H1 (cell line): ENCODE measurements at regions of chr16 and their contacts with region 1.

Region 1: GRCh38 chr16:30445408-30446202 is at the start of gene SEPHS2:
- DNase-seq: peak; percentile 96 to 97
- H3K4me3 ChIP-seq: peak within 1 kb of the TSS; percentile 71 to 86 (median 78)
- H3K27ac ChIP-seq: peak within 1 kb of the TSS; percentile 44; the same call in 1 of the 2 replicates
- H3K4me1 ChIP-seq: peaks cover 0 to 9% (median 6%) of the 10 kb centered on the region in 4 experiments; a peak in 5 of 7 replicates
- H3K27me3 ChIP-seq: peaks cover 0 to 4% (median 1%) of the 10 kb centered on the region in 4 experiments; a peak in 1 of 7 replicates
- CTCF ChIP-seq: peak; percentile 28 to 39 (median 33); a peak in 3 of 4 replicates
- EP300 ChIP-seq: no peak
- POLR2A ChIP-seq: peak; percentile 65 to 88
- RAD21 ChIP-seq: no peak; a peak in 2 of 4 replicates
- total RNA-seq, gene SEPHS2: 61.8 and 62.0 TPM in 2 replicates

Region 2: GRCh38 chr16:30335598-30336474 is 109.8 kb before region 1 on chr16:
- CTCF ChIA-PET with region 1: no interaction called
- POLR2A ChIA-PET with region 1: no interaction called
- DNase-seq: no peak
- H3K4me3 ChIP-seq: peak overlapping the region in 1 of 4 experiments; percentile 69; a peak in 2 of 8 replicates
- H3K27ac ChIP-seq: no peak overlapping the region
- H3K4me1 ChIP-seq: peaks cover 0 to 3% (median 0%) of the 10 kb centered on the region in 4 experiments; a peak in 1 of 7 replicates
- H3K27me3 ChIP-seq: no peaks in the 10 kb centered on the region
- CTCF ChIP-seq: no peak
- EP300 ChIP-seq: no peak
- POLR2A ChIP-seq: no peak
- RAD21 ChIP-seq: no peak

Region 3: DNA sequence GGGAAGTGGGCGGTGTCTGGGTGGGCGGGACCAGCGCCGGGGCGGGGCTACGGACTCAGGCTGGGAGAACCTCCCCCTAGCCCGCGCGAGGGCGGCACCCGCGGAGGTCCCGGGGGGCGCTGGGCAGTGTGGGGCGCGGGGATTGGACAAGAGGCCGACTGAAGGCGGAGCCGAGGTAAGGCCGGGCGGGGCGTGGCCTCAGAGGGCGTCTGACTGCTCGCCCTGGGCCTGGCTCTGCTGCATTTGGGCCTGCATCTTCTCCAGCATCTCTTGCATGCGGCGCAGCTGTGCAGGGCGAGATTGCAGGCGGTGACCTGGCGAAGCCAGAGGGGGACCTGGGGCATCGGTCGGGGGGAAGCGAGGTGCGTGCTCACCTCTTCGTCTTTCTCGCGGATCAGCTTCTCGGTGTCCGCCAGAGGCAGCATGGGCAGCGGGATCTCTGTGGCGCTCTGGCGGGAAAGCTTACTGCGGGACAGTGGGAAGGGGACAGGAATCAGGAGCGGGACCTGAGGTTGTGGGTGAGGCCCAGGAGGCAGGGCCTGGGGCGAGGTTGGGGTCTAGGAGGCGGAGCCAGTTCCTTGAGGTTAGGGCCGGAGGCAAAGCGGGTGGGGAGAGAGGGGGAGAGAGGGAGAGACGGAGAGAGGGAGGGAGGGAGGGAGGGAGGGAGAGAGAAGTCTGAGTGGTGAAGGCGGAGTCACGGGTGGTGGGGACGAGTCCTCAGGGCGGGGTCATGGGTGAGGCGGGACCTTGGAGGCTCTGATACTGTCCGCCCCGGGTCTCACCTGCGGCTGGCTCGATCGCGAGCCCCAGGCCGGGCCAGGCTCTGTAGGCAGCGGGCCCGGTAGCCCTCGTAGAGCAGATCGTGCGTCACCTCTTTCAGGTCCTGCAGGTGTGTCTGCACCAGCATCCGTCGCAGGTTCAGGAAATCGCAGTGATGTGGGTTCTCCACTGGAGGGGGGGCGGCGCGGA is 67.1 kb before region 1 on chr16:
- CTCF ChIA-PET with region 1: no interaction called
- POLR2A ChIA-PET with region 1: no interaction called
- DNase-seq: peak; percentile 92 to 99
- H3K4me3 ChIP-seq: peak overlapping the region; percentile 70 to 88 (median 82)
- H3K27ac ChIP-seq: peak overlapping the region; percentile 92
- H3K4me1 ChIP-seq: peaks cover 0 to 9% (median 5%) of the 10 kb centered on the region in 4 experiments; a peak in 5 of 7 replicates
- H3K27me3 ChIP-seq: no peaks in the 10 kb centered on the region
- CTCF ChIP-seq: no peak
- EP300 ChIP-seq: no peak
- POLR2A ChIP-seq: peak; percentile 29 to 64; a peak in 2 of 3 replicates
- RAD21 ChIP-seq: no peak

Region 4: DNA sequence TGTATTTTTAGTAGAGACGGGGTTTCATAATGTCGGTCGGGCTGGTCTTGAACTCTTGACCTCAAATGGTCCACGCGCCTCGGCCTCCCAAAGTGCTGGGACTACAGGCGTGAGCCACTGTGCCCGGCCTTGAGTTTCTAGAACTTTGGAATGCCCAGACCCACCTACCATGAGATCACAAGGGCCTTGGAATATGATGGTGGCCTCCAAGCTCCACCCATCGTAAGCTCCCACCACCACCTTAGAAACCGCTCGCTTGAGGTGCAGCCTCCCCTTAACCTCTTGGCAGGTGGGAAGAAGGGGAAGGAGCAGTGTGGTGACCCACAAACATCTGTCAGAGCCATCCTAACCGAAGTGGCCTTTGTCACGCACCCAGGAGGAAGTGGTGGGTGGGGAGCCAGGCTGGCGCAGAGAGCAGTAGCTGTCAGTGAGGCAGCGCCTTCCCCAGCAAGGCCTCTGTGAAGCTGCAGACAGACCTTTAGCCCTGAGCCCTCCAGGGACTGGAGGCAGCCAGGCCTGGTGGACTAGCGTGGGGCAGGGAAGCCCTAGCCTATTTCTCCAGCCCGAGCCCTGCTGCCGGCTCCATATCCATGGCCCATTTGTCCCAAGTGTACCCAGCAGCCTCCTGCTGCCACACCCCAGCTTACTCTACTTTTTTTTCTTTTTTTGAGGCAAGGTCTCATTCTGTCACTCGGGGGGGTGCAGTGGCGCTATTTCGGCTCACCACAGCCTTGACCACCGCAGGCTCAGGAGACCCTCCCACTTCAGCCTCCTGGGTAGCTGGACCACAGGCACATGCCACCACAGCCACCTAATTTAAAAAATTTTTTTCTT is 13.2 kb after region 1 on chr16:
- CTCF ChIA-PET with region 1: interaction called, 21 read pairs
- POLR2A ChIA-PET with region 1: interaction called, 5 read pairs
- DNase-seq: no peak
- H3K4me3 ChIP-seq: no peak overlapping the region
- H3K27ac ChIP-seq: no peak overlapping the region
- H3K4me1 ChIP-seq: no peaks in the 10 kb centered on the region
- H3K27me3 ChIP-seq: no peaks in the 10 kb centered on the region; a peak in 1 of 7 replicates
- CTCF ChIP-seq: no peak
- EP300 ChIP-seq: no peak
- POLR2A ChIP-seq: no peak
- RAD21 ChIP-seq: no peak

Region 5: GRCh38 chr16:30482366-30482765 is 36.8 kb after region 1 on chr16:
- CTCF ChIA-PET with region 1: interaction called, 15 read pairs
- POLR2A ChIA-PET with region 1: no interaction called
- DNase-seq: no peak
- H3K4me3 ChIP-seq: no peak overlapping the region
- H3K27ac ChIP-seq: no peak overlapping the region
- H3K4me1 ChIP-seq: no peaks in the 10 kb centered on the region
- H3K27me3 ChIP-seq: no peaks in the 10 kb centered on the region
- CTCF ChIP-seq: peak in 1 of 3 experiments; percentile 42; a peak in 1 of 4 replicates
- EP300 ChIP-seq: no peak
- POLR2A ChIP-seq: no peak
- RAD21 ChIP-seq: no peak

Region 6: DNA sequence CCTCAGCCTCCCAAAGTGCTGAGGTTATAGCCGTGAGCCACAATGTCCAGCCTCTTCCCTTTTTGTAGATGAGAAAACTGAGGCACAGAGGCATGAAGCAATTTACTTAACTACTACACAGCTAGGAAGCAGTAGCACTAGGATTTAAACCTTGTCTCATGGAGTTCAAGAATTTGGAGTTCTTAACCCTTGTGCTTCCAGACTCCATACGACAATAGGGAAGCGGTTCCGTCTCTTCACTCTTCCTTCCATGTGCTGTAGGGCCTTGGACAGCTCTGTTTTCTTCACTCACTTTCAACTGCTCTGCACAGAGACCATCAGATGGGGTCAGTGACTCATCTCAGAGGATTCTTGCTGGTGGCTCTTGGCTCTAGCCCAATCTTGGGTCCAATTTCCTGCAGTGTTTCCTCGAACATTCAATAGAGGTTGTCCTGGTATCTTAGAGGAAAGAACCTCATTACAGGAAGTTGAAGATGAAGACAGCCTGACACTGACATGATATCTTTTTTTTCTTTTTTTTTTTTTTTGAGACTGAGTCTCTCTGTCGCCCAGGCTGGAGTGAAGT is 46.2 kb after region 1 on chr16:
- CTCF ChIA-PET with region 1: interaction called, 13 read pairs
- POLR2A ChIA-PET with region 1: interaction called, 3 read pairs
- DNase-seq: no peak
- H3K4me3 ChIP-seq: no peak overlapping the region
- H3K27ac ChIP-seq: no peak overlapping the region
- H3K4me1 ChIP-seq: peaks cover 0 to 3% (median 1%) of the 10 kb centered on the region in 4 experiments; a peak in 1 of 7 replicates
- H3K27me3 ChIP-seq: peaks cover 0 to 2% (median 0%) of the 10 kb centered on the region in 4 experiments; a peak in 1 of 7 replicates
- CTCF ChIP-seq: no peak
- EP300 ChIP-seq: no peak
- POLR2A ChIP-seq: no peak
- RAD21 ChIP-seq: no peak

Region 7: DNA sequence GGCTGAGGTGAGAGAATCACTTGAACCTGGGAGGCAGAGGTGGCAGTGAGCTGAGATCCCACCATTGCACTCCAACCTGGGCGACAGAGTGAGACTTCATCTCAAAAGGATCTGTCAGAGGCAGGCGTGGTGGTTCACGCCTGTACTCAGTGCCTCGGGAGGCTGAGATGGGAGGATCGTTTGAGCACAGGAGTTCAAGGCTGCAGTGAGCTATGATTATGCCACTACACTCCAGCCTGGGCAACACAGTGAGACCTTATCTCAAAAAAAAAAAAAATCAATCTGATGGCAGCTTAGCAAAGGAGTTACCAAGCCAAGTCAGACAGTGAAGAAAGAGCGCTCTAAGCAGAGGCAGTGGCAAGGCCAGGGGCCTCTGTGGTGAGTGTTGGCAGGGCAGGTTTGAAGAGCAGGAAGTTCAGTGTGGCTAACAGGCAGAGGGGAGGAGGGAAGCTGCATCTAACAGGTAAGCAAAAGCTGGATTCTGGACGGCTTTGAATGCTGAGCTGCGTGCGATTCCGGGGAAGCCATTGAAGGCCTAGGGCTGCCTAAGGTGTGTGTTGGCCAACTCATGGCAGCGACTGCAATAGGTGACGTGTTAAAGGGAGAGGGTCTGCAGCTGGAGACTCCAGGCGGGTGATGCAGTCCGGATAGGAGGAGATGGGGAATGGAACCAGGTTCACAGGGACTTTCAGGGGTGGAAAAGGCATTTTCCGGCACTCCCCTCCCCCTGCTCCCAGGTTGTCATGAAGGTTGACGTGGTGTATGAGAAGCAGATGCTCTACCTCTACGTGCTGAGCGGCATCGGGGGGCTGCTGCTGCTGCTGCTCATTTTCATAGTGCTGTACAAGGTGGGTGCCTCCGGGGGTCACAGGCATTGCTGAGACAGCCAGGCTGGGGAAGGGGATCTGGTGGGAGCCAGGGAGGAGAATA is 73.8 kb after region 1 on chr16:
- CTCF ChIA-PET with region 1: interaction called, 15 read pairs
- POLR2A ChIA-PET with region 1: no interaction called
- DNase-seq: no peak
- H3K4me3 ChIP-seq: no peak overlapping the region
- H3K27ac ChIP-seq: no peak overlapping the region
- H3K4me1 ChIP-seq: no peaks in the 10 kb centered on the region
- H3K27me3 ChIP-seq: no peaks in the 10 kb centered on the region; a peak in 1 of 7 replicates
- CTCF ChIP-seq: no peak
- EP300 ChIP-seq: no peak
- POLR2A ChIP-seq: no peak
- RAD21 ChIP-seq: no peak

Region 8: DNA sequence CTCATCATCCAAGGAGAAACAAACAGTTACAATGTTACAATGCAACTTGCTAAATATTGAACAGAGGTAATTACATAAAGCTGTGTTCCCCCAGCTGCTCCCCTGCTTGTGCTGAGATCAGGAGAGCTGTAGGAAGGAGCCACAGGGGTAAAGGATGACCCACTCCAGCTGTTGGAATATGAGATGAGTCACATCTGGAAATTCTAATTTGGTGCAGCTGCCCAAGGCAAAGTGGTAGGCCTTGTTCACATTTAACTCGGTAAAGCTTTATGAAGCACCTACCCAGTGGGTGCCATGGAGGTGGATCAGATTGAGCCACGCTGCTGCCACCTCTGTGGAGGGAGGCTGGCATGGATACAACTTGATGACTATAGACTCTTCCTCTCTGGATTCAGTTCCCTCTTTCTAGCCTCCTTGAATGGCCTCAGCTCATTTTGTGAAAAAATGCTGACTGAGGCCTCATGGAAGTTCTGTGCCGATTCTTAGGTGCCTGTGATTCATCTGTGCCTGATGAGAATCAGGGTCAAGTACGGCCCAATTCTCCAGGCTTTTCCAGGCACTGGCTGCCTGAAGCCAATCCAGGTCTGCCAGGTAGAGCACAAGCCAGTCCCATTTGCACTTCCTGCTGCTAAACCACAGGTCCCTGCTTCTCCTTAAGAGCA is 157.1 kb after region 1 on chr16:
- CTCF ChIA-PET with region 1: interaction called, 42 read pairs
- POLR2A ChIA-PET with region 1: no interaction called
- DNase-seq: no peak
- H3K4me3 ChIP-seq: no peak overlapping the region
- H3K27ac ChIP-seq: no peak overlapping the region
- H3K4me1 ChIP-seq: no peaks in the 10 kb centered on the region
- H3K27me3 ChIP-seq: no peaks in the 10 kb centered on the region
- CTCF ChIP-seq: no peak
- EP300 ChIP-seq: no peak
- POLR2A ChIP-seq: no peak
- RAD21 ChIP-seq: no peak

Region 9: DNA sequence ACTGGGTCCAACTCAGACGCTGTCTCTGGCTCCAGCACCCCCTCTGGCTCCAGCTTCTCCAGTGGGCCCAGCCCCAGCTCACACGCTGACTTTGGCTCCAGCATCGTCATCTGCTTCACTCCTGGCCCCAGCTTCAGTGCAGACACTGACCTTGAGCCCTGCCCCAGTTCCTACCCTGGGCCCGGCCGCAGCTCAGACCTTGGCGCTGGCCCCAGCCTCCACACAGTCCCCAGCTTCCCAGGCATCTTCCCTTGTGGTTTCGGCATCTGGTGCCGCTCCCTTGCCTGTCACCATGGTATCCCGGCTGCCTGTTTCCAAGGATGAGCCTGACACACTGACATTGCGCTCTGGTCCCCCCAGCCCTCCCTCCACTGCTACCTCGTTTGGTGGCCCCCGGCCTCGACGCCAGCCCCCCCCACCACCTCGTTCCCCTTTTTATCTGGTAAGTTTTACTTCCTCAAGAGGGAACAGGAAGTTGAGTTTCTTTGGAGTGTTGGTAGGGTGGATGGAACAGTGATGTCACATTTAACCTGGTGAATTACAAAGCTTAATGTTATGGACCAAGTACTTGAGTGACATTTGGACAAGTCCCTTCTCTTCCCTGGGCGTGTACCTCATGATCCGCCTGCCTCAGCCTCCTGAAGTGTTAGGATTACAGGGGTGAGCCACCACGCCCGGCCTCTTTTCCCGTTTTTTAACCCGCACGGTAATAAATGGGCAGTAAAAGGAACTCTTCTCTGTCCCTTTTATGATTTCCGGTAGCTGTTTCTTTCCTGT is 279.2 kb after region 1 on chr16:
- CTCF ChIA-PET with region 1: no interaction called
- POLR2A ChIA-PET with region 1: no interaction called
- DNase-seq: no peak
- H3K4me3 ChIP-seq: no peak overlapping the region
- H3K27ac ChIP-seq: no peak overlapping the region
- H3K4me1 ChIP-seq: peaks cover 0 to 3% (median 3%) of the 10 kb centered on the region in 4 experiments; a peak in 2 of 7 replicates
- H3K27me3 ChIP-seq: no peaks in the 10 kb centered on the region
- CTCF ChIP-seq: no peak
- EP300 ChIP-seq: no peak
- POLR2A ChIP-seq: no peak
- RAD21 ChIP-seq: no peak

Region 10: DNA sequence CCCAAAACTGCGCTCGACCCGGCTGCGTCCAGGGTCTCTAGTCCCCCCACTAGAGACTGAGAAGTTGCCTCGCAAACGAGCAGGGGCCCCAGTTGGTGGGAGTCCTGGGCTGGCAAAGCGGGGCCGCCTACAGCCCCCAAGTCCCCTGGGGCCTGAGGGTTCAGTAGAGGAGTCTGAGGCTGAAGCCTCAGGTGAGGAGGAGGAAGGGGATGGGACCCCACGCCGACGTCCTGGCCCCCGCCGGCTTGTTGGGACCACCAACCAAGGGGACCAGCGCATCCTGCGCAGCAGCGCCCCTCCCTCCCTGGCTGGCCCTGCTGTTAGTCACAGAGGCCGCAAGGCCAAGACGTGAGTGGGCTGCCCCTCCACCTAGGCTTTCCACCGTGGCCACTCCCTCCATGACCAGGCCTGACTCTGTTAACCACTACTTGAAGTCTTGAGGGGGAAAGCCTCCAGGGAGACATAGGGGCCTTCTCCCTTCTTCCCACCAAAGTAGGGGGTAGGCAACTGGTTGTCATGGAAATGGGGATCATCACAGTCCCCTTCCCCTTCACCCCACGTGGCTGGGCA is 293.9 kb after region 1 on chr16:
- CTCF ChIA-PET with region 1: no interaction called
- POLR2A ChIA-PET with region 1: no interaction called
- DNase-seq: no peak
- H3K4me3 ChIP-seq: no peak overlapping the region
- H3K27ac ChIP-seq: no peak overlapping the region; the same call in 1 of the 2 replicates
- H3K4me1 ChIP-seq: peaks cover 0 to 7% (median 2%) of the 10 kb centered on the region in 4 experiments; a peak in 5 of 7 replicates
- H3K27me3 ChIP-seq: no peaks in the 10 kb centered on the region; a peak in 1 of 7 replicates
- CTCF ChIP-seq: no peak
- EP300 ChIP-seq: no peak
- POLR2A ChIP-seq: no peak
- RAD21 ChIP-seq: no peak